ENCODE measurements at regions of chr6 and their contacts with region 1.

Region 1: GRCh38 chr6:44468835-44469234 is 81.3 kb downstream of the CDC5L start:
- DNase-seq: no peak
- ATAC-seq: no peak
- H3K4me3 ChIP-seq: no peak overlapping the region
- H3K27ac ChIP-seq: no peak overlapping the region
- H3K4me1 ChIP-seq: peaks cover 3 to 9% of the 10 kb centered on the region in 2 experiments; a peak in 2 of 4 replicates
- H3K27me3 ChIP-seq: no peaks in the 10 kb centered on the region
- CTCF ChIP-seq: no peak
- POLR2A ChIP-seq: no peak
- RAD21 ChIP-seq: no peak

Region 2: DNA sequence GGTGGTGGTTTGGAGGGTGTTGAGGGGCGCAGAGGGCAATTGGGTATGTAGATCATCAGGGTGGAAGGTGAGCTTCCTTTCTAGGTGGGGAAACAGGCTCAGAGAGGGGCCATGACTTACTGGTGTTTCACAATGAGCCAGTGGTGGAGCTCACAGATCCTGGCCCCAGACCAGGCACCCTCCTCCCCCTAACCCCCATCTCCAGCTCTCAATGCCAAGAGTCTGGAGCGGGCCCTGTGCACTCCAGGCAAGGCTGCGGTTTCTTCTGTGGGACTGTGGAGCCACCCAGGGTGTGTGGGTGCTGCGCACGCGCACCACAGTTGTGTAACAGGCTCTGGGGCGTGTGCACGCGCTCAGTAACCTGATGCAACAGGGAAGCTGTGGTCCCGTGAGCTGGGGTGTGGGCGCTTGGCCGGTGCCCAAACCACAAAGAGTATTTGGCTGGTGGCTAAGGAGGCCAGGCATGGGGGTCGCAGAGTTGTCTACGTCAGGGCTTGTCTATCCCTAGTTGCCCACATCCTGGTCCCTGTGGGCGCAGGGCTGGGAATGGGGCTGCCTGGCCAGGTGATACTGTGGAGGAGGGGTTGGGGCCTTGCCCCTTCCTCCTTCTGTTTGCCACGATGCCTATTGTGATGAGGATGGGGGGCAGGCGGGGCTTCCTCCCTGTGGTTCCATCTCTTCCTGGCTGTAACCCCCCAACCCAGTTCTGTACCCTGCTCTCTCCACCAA is 743.8 kb before region 1 on chr6:
- CTCF ChIA-PET with region 1: no interaction called
- POLR2A ChIA-PET with region 1: no interaction called
- RAD21 ChIA-PET with region 1: no interaction called
- intact Hi-C with region 1: no loop called
- DNase-seq: peak; percentile 26
- ATAC-seq: peak; percentile 68
- H3K4me3 ChIP-seq: no peak overlapping the region
- H3K27ac ChIP-seq: peak overlapping the region; percentile 19; the same call in 1 of the 2 replicates
- H3K4me1 ChIP-seq: peaks cover 23 to 27% of the 10 kb centered on the region in 2 experiments
- H3K27me3 ChIP-seq: no peaks in the 10 kb centered on the region
- CTCF ChIP-seq: no peak
- POLR2A ChIP-seq: no peak
- RAD21 ChIP-seq: peak; percentile 11; the same call in 1 of the 2 replicates

Region 3: DNA sequence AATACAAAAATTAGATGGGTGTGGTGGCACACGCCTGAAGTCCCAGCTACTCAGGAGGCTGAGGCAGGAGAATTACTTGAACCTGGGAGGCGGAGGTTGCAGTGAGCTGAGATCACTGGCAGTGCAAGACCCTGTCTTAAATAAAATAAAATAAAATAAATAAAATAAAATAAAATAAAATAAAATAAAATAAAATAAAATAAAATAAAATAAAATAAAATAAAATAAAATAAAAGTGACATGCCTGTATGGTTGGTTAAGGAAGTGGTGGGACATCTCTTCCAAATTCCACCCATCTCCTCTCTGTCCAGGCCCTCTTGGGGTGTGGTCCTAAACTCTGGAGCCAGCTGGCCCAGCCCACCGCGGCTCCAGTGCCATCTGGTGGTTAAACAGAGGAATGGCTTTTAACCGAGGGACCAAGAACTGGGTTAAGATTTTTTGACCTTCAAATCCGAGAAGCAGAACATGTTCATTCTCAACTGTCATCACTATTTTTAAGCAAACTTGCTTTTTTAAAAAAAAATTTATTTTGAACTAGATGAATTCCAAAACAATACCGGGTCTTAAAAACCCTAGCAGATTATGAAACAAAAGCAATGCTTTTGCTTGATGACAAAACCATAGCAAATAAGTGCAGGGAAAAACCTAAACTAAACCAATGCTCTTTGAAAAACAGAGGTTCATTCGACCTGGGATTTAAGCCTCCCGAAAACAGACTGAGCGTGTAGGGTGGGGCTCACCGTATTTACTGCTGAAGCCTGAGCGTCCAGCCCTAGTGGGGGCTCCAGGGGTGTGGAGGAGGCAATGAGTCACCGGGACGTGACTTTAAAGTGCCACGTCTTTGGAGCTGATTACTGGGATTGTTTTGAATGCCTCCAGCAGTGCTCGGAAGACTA is 12.5 kb before region 1 on chr6:
- CTCF ChIA-PET with region 1: interaction called, 24 read pairs
- POLR2A ChIA-PET with region 1: interaction called, 5 read pairs
- RAD21 ChIA-PET with region 1: no interaction called
- intact Hi-C with region 1: no loop called
- DNase-seq: peak; percentile 41
- ATAC-seq: peak; percentile 90
- H3K4me3 ChIP-seq: peak overlapping the region; percentile 21 to 44; a peak in 3 of 4 replicates
- H3K27ac ChIP-seq: no peak overlapping the region
- H3K4me1 ChIP-seq: peaks cover 8 to 15% of the 10 kb centered on the region in 2 experiments; a peak in 3 of 4 replicates
- H3K27me3 ChIP-seq: no peaks in the 10 kb centered on the region
- CTCF ChIP-seq: peak; percentile 71 to 89 (median 81)
- POLR2A ChIP-seq: no peak
- RAD21 ChIP-seq: peak; percentile 75

Region 4: GRCh38 chr6:44539693-44540662 is 71.1 kb after region 1 on chr6:
- CTCF ChIA-PET with region 1: no interaction called
- POLR2A ChIA-PET with region 1: no interaction called
- RAD21 ChIA-PET with region 1: no interaction called
- intact Hi-C with region 1: no loop called
- DNase-seq: no peak
- ATAC-seq: no peak
- H3K4me3 ChIP-seq: no peak overlapping the region
- H3K27ac ChIP-seq: no peak overlapping the region
- H3K4me1 ChIP-seq: no peaks in the 10 kb centered on the region
- H3K27me3 ChIP-seq: no peaks in the 10 kb centered on the region
- CTCF ChIP-seq: no peak
- POLR2A ChIP-seq: no peak
- RAD21 ChIP-seq: no peak

Measured in HCT116 (cell line).